ENCODE measurements at regions of chr7 and their contacts with region 1.

Region 1: GRCh38 chr7:107725151-107725740 is 18.7 kb upstream of the CBLL1 start:
- DNase-seq: peak; percentile 42
- H3K4me3 Mint-ChIP-seq: no peak overlapping the region
- H3K27ac Mint-ChIP-seq: no peak overlapping the region
- H3K4me1 Mint-ChIP-seq: no peaks in the 10 kb centered on the region
- H3K27me3 Mint-ChIP-seq: peaks cover 3% of the 10 kb centered on the region

Region 2: DNA sequence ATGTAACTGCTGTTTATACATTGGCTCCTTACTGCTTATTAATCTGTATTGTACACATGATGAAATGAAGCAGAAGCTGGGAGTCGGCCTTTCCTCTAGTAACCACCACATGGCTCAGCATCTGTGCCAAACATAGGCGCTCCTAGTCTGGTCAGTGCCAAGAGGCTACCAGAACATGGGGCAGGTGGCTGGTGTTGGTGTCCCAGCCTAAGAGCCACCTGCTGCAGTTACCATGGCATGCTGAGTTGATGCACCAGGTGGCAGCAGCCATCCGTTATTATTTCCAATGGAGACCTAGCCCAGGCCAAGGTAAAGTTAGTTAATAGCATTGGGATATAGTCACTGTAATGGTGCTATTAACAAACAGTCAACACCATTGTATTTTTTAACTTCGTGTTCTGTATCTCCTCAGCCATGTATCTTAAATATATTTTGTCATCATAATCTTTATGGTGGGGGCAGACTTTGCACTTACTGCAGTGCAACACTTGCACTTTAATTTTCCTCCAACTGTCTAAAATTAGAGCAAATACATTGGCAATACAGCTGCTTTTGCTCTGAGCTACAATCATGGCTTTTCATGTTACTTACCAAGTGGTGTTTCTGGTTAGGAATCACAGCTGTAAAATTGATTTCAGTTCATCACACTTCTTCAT is 523.3 kb before region 1 on chr7:
- CTCF ChIA-PET with region 1: interaction called, 4 read pairs
- POLR2A ChIA-PET with region 1: no interaction called
- intact Hi-C with region 1: loop called (anchors 5 kb)
- DNase-seq: peak; percentile 53
- H3K4me3 Mint-ChIP-seq: no peak overlapping the region
- H3K27ac Mint-ChIP-seq: no peak overlapping the region
- H3K4me1 Mint-ChIP-seq: no peaks in the 10 kb centered on the region
- H3K27me3 Mint-ChIP-seq: no peaks in the 10 kb centered on the region

Region 3: DNA sequence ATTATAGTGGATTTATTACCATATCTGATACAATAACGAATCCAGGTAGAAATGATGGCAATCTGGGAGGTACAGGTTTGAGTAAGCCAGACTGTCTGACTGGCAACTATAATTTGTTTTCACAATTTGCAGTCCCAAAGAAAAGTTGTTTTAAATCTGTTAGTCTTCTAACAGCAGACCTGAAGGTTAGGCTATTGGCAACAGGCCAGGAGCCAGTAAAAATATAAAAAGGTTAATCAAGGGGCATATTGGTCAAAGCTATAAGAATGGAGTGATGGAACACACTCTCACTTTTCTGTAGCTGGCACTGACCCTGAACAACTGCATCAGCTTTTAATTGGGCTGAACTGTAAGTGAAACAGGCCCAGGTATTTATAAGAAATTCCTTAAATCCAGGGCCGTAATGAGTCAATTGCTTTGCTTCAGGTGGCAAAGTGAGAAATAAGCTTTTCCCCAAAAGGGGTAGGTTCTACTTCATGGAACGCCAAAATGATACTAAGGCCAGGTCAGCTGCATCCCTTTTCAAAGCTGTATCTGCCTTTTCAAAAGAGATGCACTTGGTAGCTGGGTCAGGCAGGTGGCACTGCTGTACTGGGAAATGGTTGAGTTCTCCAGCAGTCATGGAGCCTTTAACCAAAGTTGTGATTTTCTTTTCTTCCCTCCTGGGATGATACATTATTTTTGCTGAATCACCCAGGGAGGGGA is 262.4 kb before region 1 on chr7:
- CTCF ChIA-PET with region 1: interaction called, 45 read pairs
- POLR2A ChIA-PET with region 1: no interaction called
- intact Hi-C with region 1: loop called (anchors 1 kb)
- DNase-seq: peak; percentile 61
- H3K4me3 Mint-ChIP-seq: no peak overlapping the region
- H3K27ac Mint-ChIP-seq: no peak overlapping the region
- H3K4me1 Mint-ChIP-seq: no peaks in the 10 kb centered on the region
- H3K27me3 Mint-ChIP-seq: no peaks in the 10 kb centered on the region